ENCODE measurements at regions of chr9 and their contacts with region 1.

Region 1: GRCh38 chr9:6584881-6585597 is 60.5 kb downstream of the GLDC start:
- DNase-seq: no peak
- H3K4me3 ChIP-seq: no peak overlapping the region
- H3K27ac ChIP-seq: no peak overlapping the region
- H3K4me1 ChIP-seq: peaks cover 0 to 28% (median 4%) of the 10 kb centered on the region in 6 donors
- H3K27me3 ChIP-seq: no peaks in the 10 kb centered on the region
- CTCF ChIP-seq: peak in 9 of 11 experiments; percentile 20 to 60 (median 50)
- POLR2A ChIP-seq: no peak

Region 2: GRCh38 chr9:6348766-6349165 is 236.3 kb before region 1 on chr9:
- intact Hi-C with region 1: no loop called
- DNase-seq: no peak
- H3K4me3 ChIP-seq: no peak overlapping the region
- H3K27ac ChIP-seq: no peak overlapping the region
- H3K4me1 ChIP-seq: no peaks in the 10 kb centered on the region
- H3K27me3 ChIP-seq: peaks cover 0 to 3% (median 0%) of the 10 kb centered on the region in 7 donors
- CTCF ChIP-seq: no peak
- POLR2A ChIP-seq: no peak

Region 3: GRCh38 chr9:6667633-6668280 is 82.7 kb after region 1 on chr9:
- intact Hi-C with region 1: loop called (anchors 10 kb)
- DNase-seq: no peak
- H3K4me3 ChIP-seq: no peak overlapping the region
- H3K27ac ChIP-seq: no peak overlapping the region
- H3K4me1 ChIP-seq: peaks cover 0 to 6% (median 0%) of the 10 kb centered on the region in 6 donors
- H3K27me3 ChIP-seq: no peaks in the 10 kb centered on the region
- CTCF ChIP-seq: peak in 9 of 11 experiments; percentile 12 to 56 (median 42)
- POLR2A ChIP-seq: no peak

Measured in spleen (tissue), 13 donors.